PC-3 (cell line): ENCODE measurements at regions of chr16 and their contacts with region 1.

Region 1: GRCh38 chr16:63822818-63823217 is 1299.0 kb downstream of the CDH11 start:
- DNase-seq: no peak
- ATAC-seq: no peak
- H3K4me3 ChIP-seq: no peak overlapping the region
- H3K27ac ChIP-seq: no peak overlapping the region
- H3K4me1 ChIP-seq: no peaks in the 10 kb centered on the region
- H3K27me3 ChIP-seq: no peaks in the 10 kb centered on the region
- CTCF ChIP-seq: no peak

Region 2: GRCh38 chr16:63850979-63851378 is 28.2 kb after region 1 on chr16:
- CTCF ChIA-PET with region 1: no interaction called
- POLR2A ChIA-PET with region 1: no interaction called
- intact Hi-C with region 1: loop called (anchors 2 kb)
- DNase-seq: no peak
- ATAC-seq: no peak
- H3K4me3 ChIP-seq: no peak overlapping the region
- H3K27ac ChIP-seq: no peak overlapping the region
- H3K4me1 ChIP-seq: no peaks in the 10 kb centered on the region
- H3K27me3 ChIP-seq: peaks cover 5% of the 10 kb centered on the region
- CTCF ChIP-seq: no peak